Activated CD4-positive, alpha-beta T cell treated with anti-CD3 and anti-CD28 coated beads for 36 hours (primary cell): ENCODE measurements at regions of chr16 and their contacts with region 1.

Region 1: DNA sequence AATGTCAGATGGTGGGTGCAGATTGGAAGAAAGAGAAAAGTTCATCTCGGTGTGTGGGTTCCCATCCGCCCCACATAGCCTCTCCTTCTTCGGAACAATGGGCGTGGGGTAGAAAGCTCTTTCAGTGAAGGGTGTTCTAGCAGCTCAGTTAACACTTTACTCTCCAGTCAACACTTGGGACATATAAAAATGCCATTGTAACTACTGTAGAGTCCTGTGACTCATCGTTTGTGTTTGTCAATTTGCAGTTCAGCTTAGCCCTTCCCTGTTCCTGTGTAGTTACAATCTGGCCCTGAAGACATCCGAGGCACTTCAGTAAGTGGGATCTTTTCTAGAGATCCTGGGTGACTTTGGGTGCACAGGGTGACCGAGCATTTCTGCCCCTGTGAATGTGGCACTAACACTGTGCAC is 11.5 kb upstream of the CLEC18C start:
- DNase-seq: no peak
- ATAC-seq: no peak
- H3K4me3 Mint-ChIP-seq: no peak overlapping the region
- H3K27ac Mint-ChIP-seq: peak overlapping the region; percentile 11
- H3K4me1 Mint-ChIP-seq: no peaks in the 10 kb centered on the region
- H3K27me3 Mint-ChIP-seq: no peaks in the 10 kb centered on the region

Region 2: DNA sequence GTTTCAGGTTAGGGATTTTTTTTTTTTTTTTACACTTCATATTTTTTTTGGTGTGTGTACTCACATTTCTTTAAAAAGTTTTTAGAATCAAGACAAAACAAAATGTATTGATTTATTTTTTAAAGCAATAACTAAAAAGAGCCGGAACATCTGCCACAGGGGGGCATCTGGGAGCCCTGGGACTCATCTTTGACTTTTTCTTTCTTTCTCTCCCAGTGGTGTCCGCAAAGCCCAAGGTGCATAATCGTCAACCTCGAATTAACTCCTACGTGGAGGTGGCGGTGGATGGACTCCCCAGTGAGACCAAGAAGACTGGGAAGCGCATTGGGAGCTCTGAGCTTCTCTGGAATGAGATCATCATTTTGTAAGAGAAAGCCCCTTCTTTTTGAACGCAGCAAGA is 363.6 kb before region 1 on chr16:
- CTCF ChIA-PET with region 1: no interaction called
- POLR2A ChIA-PET with region 1: no interaction called
- intact Hi-C with region 1: no loop called
- DNase-seq: no peak
- ATAC-seq: no peak
- H3K4me3 Mint-ChIP-seq: no peak overlapping the region
- H3K27ac Mint-ChIP-seq: no peak overlapping the region
- H3K4me1 Mint-ChIP-seq: no peaks in the 10 kb centered on the region
- H3K27me3 Mint-ChIP-seq: no peaks in the 10 kb centered on the region

Region 3: GRCh38 chr16:69921127-69921526 is 240.9 kb before region 1 on chr16:
- CTCF ChIA-PET with region 1: no interaction called
- POLR2A ChIA-PET with region 1: no interaction called
- intact Hi-C with region 1: no loop called
- DNase-seq: no peak
- ATAC-seq: no peak
- H3K4me3 Mint-ChIP-seq: no peak overlapping the region
- H3K27ac Mint-ChIP-seq: no peak overlapping the region
- H3K4me1 Mint-ChIP-seq: no peaks in the 10 kb centered on the region
- H3K27me3 Mint-ChIP-seq: no peaks in the 10 kb centered on the region

Region 4: GRCh38 chr16:70151391-70151790 is 10.7 kb before region 1 on chr16:
- CTCF ChIA-PET with region 1: interaction called, 20 read pairs
- POLR2A ChIA-PET with region 1: no interaction called
- intact Hi-C with region 1: no loop called
- DNase-seq: no peak
- ATAC-seq: no peak
- H3K4me3 Mint-ChIP-seq: no peak overlapping the region
- H3K27ac Mint-ChIP-seq: peak overlapping the region; percentile 20
- H3K4me1 Mint-ChIP-seq: no peaks in the 10 kb centered on the region
- H3K27me3 Mint-ChIP-seq: no peaks in the 10 kb centered on the region

Region 5: DNA sequence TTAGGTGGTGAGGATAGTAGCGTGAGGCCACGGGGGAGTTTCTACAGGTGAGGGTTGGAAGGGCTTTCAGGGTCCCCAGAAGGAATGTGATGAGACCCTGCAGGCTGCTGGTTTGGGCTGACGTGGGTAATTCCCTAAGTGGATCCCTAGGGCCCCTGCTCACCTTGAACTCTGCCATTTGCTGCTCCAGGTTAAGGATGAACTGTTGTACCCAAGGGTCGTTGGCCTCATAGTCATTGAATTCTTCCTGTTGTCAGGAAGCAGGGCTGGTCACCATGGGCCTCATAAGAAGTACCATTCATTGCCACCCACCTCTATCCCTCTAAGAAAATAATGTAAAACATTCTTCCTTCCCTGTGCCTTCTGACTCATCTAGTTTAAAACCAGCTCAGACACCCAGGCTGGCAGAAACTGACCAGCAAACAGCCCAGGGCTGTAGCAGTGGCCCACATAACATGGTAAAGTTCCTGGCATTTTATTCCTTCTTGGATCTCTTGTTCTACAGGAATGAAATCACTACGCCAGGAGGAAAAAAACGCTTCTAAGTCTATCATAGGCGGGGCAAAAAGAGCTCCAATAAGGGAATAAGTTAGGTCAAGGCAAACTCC is 320.0 kb after region 1 on chr16:
- CTCF ChIA-PET with region 1: no interaction called
- POLR2A ChIA-PET with region 1: no interaction called
- intact Hi-C with region 1: no loop called
- DNase-seq: no peak
- ATAC-seq: no peak
- H3K4me3 Mint-ChIP-seq: no peak overlapping the region
- H3K27ac Mint-ChIP-seq: no peak overlapping the region
- H3K4me1 Mint-ChIP-seq: peaks cover 12% of the 10 kb centered on the region
- H3K27me3 Mint-ChIP-seq: no peaks in the 10 kb centered on the region